GM10248 (cell line): ENCODE measurements at regions of chr14 and their contacts with region 1.

Region 1: DNA sequence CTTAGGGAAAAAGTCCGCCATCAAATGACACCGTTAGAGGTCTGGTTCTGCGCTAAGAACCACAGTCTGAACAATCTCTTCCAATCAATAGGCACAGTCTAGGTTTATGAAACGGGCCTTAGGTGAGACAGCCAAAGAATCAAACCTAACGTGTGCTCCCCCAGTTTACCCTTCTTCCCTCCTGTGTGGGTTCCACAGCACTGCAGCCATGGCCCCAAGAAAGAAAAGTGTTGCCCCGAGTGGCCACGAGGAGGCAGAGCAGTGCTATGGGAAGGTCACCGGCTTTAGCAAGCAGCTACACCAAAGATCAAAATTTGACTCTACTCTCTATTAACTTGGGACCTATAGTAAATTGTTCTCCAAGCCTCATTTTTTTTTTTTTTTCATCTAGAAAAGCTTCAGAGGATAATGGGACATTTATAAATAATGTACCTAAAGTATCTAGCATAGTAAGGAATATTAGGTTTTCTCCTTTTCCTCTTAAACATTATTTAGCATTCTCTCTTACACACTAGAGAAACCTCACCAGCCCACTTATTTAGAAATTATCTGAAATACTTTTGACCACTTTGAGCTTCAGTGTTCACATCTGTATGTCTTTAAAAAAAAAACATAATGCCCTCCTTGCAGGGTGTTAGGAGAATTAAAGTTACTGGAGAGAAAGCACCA is 70.2 kb upstream of the GPHB5 start:
- DNase-seq: peak; percentile 56
- CTCF ChIP-seq: peak; percentile 84

Region 2: DNA sequence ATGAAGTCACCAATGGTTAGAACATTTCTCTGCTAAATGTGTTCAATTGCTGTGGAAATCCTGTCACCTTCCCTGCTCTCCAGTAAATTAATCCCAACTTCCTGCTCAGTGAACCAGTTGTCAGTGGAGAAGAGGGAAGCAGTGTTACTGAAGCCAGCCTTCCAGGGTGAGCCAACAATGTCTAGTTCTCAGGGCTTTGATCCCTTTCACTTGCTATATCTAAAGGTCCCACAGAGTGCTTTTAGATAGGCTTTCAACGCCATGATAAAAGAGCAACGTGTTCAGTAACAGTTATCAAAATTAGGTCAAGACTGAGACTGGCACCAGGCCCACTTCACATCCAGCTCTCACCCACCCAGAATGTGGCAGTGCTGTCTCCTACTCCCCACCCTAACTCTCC is 483.3 kb before region 1 on chr14:
- CTCF ChIA-PET with region 1: no interaction called
- POLR2A ChIA-PET with region 1: no interaction called
- DNase-seq: no peak
- CTCF ChIP-seq: no peak

Region 3: DNA sequence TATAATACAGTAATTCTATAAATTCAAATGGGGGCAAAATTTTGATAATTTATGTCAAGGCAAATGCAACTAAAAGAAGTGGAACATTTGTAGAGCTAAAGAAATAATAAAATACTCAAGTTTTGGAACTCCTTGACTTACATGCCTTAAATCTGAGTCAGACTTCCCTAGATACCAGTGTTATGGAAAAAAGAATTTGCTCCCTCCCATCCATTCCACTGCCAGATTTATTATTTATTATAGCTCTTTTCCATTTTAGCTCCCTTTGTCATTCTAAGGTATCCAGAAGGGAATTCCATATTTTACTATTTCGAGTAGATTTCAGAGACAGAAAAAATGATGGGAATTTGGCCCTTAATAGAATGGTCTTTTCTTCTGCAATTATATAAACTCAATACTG is 140.7 kb before region 1 on chr14:
- CTCF ChIA-PET with region 1: no interaction called
- POLR2A ChIA-PET with region 1: no interaction called
- DNase-seq: no peak
- CTCF ChIP-seq: no peak

Region 4: GRCh38 chr14:63342371-63342770 is 46.5 kb before region 1 on chr14:
- CTCF ChIA-PET with region 1: no interaction called
- POLR2A ChIA-PET with region 1: no interaction called
- DNase-seq: no peak
- CTCF ChIP-seq: no peak

Region 5: DNA sequence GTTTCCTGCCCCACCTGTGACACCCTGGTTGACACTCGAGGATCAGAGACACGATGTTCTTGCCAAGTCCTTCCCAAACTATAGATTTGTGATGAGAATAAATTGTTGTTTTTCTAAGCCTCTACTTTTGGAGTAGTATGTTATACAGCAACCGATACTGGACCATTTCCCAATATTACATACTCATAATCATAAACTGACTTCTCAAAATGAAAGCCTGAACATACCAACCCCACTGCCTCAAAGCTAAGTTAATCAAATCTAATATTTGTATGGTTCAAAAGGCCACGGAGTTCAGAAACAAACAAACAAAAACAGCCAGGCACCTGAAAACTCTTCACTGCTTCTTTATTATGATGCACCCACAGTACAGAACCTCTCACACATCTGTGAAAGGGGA is 17.9 kb before region 1 on chr14:
- CTCF ChIA-PET with region 1: interaction called, 11 read pairs
- POLR2A ChIA-PET with region 1: no interaction called
- DNase-seq: no peak
- CTCF ChIP-seq: no peak

Region 6: DNA sequence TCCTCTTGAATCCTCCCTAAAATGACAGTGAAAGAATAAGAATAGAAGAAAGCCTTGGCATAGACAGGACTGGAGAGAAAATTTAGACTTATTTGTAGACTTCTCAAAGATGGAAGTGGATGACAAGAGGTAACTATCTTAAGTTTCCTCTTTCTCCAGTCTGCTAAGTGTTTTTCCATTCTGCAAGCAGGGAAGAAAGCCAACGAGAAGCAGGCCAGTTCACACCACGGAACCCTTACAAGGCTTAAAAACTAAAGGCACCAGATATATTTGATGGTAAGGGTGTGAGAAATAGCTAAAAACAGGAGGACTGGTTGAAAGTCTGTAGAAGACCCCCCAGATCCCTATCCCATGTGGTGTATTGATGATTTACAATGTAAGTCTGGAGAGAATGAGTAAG is 12.7 kb after region 1 on chr14:
- CTCF ChIA-PET with region 1: interaction called, 19 read pairs
- POLR2A ChIA-PET with region 1: no interaction called
- DNase-seq: no peak
- CTCF ChIP-seq: no peak

Region 7: DNA sequence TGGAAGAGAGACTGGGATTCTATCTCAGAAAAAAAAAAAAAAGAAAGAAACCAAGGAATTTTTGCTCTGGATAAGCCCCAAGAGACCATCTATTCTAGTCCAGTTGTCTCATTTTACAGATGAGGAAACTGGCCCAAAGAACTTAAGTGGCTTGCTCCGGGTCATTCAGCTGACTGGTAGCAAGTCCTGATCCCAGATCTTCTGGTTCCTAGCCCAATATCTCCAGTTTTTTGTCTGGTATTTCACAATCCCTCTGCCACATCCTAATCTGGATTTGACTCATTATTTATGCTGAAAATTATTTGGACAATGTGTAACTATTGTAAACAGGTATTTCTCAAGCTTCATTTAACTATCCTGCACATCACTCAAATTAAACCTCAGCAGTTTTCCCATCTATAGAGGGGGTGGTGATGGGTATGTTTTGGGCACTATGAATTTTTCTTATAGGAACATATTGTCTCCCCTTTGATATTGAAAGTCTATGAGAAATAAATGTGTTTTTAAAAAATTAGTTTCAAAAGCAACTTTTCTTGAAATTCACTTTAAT is 110.9 kb after region 1 on chr14:
- CTCF ChIA-PET with region 1: no interaction called
- POLR2A ChIA-PET with region 1: no interaction called
- DNase-seq: no peak
- CTCF ChIP-seq: no peak

Region 8: GRCh38 chr14:63543000-63543825 is 154.3 kb after region 1 on chr14 and contains the start of gene PPP2R5E:
- CTCF ChIA-PET with region 1: interaction called, 10 read pairs
- POLR2A ChIA-PET with region 1: no interaction called
- DNase-seq: peak; percentile 98
- CTCF ChIP-seq: no peak